ENCODE measurements at regions of chr5 and their contacts with region 1.

Region 1: GRCh38 chr5:128213340-128213739 is 129.8 kb downstream of the SLC12A2 start:
- DNase-seq: no peak
- ATAC-seq: no peak

Region 2: DNA sequence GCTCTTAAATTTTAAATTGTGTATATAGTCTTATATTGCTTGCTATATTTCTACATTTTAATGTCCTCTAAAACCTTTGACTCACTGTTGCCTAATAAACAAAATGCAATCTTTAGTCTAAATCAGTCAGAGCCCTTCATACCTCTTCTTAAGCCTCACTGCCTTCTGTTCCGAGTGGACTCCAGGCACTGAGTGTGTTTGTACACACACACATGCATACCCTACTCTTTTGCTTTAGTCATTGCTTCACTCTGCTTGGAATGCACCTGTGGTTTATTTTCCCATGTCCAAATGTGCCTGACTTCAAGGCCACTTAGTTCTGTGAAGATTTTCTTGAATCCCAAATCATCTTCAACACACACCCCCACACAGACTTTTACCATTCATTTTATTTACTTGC is 68.8 kb before region 1 on chr5:
- intact Hi-C with region 1: no loop called
- DNase-seq: no peak
- ATAC-seq: no peak

Region 3: GRCh38 chr5:128498844-128499455 is 285.6 kb after region 1 on chr5:
- intact Hi-C with region 1: loop called (anchors 5 kb)
- DNase-seq: no peak
- ATAC-seq: peak; percentile 57

Region 4: DNA sequence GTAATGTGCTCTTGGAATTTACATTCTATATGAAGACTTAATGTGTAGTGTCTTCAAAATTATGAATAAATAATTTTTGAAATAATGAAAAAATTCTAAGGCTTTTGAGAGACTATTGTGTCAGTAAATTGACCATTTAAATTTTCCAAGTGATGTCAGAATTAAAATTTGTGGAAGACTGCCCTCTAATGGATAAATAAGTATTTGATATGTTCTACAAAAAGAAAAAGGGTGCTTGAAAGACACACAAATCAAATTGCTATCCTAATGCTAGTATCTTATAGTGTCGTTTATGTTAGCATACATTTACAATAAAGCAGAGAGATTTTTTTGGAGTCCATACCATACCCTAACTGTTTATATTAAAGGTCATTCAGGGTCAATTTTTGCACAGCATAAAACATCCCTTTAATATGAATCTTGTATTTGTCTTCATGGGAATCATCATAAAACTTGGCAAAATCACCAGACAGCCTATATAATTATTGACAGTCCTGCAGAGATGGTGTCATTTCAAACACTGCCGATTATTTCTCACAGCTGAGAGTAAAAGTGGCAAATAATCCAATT is 631.1 kb after region 1 on chr5:
- intact Hi-C with region 1: loop called (anchors 10 kb)
- DNase-seq: no peak
- ATAC-seq: no peak

Region 5: DNA sequence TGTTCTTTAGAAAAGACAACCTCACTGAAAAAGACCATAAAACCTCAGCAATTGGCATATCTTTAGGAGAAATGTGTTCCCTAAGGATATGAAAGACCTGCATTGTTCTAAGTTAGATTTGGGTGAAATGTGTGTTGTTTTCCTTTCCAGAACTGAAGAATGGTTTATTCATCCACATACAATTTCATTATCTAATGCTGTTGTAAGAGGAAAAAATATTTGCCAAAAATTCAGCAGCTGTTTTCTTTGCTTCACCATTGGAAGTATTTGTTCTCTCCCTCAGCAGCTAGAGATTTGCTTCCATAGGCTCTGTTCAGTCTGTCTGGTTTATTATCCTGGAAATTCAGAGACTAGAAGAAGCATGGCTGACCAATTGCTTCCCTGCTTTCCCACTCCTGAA is 1032.1 kb after region 1 on chr5:
- intact Hi-C with region 1: no loop called
- DNase-seq: no peak
- ATAC-seq: peak; percentile 75